Mammary epithelial cell (primary cell): ENCODE measurements at regions of chr4 and their contacts with region 1.

Region 1: GRCh38 chr4:118888666-118889311 is at the start of gene SYNPO2:
- DNase-seq: peak; percentile 78
- H3K4me3 ChIP-seq: peak within 1 kb of the TSS; percentile 44 to 62 (median 46)
- H3K27ac ChIP-seq: no peak within 1 kb of the TSS
- H3K4me1 ChIP-seq: peaks cover 15% of the 10 kb centered on the region
- H3K27me3 ChIP-seq: no peaks in the 10 kb centered on the region
- CTCF ChIP-seq: peak in 1 of 2 donors; percentile 8
- total RNA-seq, gene SYNPO2: 3.3 to 11.2 TPM

Region 2: DNA sequence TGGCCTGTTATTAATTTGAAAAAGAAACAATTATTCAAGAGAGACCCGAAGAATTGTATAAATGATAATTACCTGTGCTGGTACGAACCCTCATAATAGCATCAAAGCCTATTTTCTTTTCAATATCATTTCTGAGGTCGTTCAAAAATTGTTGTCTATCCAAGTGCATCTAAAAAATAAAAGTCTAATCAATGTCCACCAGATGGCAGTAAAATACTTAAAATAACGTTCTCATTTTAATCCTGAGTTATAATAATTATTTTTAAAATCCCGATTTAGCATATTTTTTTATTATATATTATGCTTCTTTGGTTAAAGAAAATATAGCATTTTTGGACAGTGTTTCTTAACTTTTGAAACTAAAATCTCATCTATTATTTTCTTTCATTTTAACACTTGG is 147.9 kb before region 1 on chr4:
- CTCF ChIA-PET with region 1: no interaction called
- dilution Hi-C with region 1: no loop called
- in situ Hi-C with region 1: no loop called
- intact Hi-C with region 1: loop called (anchors 1 kb)
- DNase-seq: no peak
- H3K4me3 ChIP-seq: no peak overlapping the region
- H3K27ac ChIP-seq: no peak overlapping the region
- H3K4me1 ChIP-seq: no peaks in the 10 kb centered on the region
- H3K27me3 ChIP-seq: no peaks in the 10 kb centered on the region
- CTCF ChIP-seq: peak; percentile 18 to 23

Region 3: GRCh38 chr4:118772081-118772766 is 116.6 kb before region 1 on chr4:
- CTCF ChIA-PET with region 1: no interaction called
- dilution Hi-C with region 1: no loop called
- in situ Hi-C with region 1: no loop called
- intact Hi-C with region 1: loop called (anchors 1 kb)
- DNase-seq: peak; percentile 30
- H3K4me3 ChIP-seq: no peak overlapping the region
- H3K27ac ChIP-seq: no peak overlapping the region
- H3K4me1 ChIP-seq: peaks cover 39% of the 10 kb centered on the region
- H3K27me3 ChIP-seq: no peaks in the 10 kb centered on the region
- CTCF ChIP-seq: peak; percentile 50 to 54

Region 4: GRCh38 chr4:118801899-118802575 is 86.8 kb before region 1 on chr4:
- CTCF ChIA-PET with region 1: no interaction called
- dilution Hi-C with region 1: loop called (anchors 5 kb)
- in situ Hi-C with region 1: no loop called
- intact Hi-C with region 1: no loop called
- DNase-seq: no peak
- H3K4me3 ChIP-seq: no peak overlapping the region
- H3K27ac ChIP-seq: no peak overlapping the region
- H3K4me1 ChIP-seq: no peaks in the 10 kb centered on the region
- H3K27me3 ChIP-seq: no peaks in the 10 kb centered on the region
- CTCF ChIP-seq: no peak

Region 5: GRCh38 chr4:118814058-118814457 is 74.7 kb before region 1 on chr4:
- CTCF ChIA-PET with region 1: no interaction called
- dilution Hi-C with region 1: no loop called
- in situ Hi-C with region 1: no loop called
- intact Hi-C with region 1: no loop called
- DNase-seq: no peak
- H3K4me3 ChIP-seq: no peak overlapping the region
- H3K27ac ChIP-seq: no peak overlapping the region
- H3K4me1 ChIP-seq: no peaks in the 10 kb centered on the region
- H3K27me3 ChIP-seq: no peaks in the 10 kb centered on the region
- CTCF ChIP-seq: no peak

Region 6: GRCh38 chr4:118835571-118836300 is 53.1 kb before region 1 on chr4 and contains the start of gene SEC24D:
- CTCF ChIA-PET with region 1: no interaction called
- dilution Hi-C with region 1: loop called (anchors 5 kb)
- in situ Hi-C with region 1: no loop called
- intact Hi-C with region 1: loop called (anchors 1 kb)
- DNase-seq: peak; percentile 81
- H3K4me3 ChIP-seq: peak within 1 kb of the TSS; percentile 75 to 80 (median 78)
- H3K27ac ChIP-seq: peak within 1 kb of the TSS; percentile 91
- H3K4me1 ChIP-seq: peaks cover 6% of the 10 kb centered on the region
- H3K27me3 ChIP-seq: no peaks in the 10 kb centered on the region
- CTCF ChIP-seq: no peak
- total RNA-seq, gene SEC24D: 41.8 to 70.6 TPM

Region 7: GRCh38 chr4:118842055-118842454 is 46.7 kb before region 1 on chr4:
- CTCF ChIA-PET with region 1: no interaction called
- dilution Hi-C with region 1: loop called (anchors 5 kb)
- in situ Hi-C with region 1: no loop called
- intact Hi-C with region 1: no loop called
- DNase-seq: peak; percentile 69
- H3K4me3 ChIP-seq: no peak overlapping the region
- H3K27ac ChIP-seq: no peak overlapping the region
- H3K4me1 ChIP-seq: peaks cover 11% of the 10 kb centered on the region
- H3K27me3 ChIP-seq: no peaks in the 10 kb centered on the region
- CTCF ChIP-seq: no peak

Region 8: GRCh38 chr4:118968005-118968404 is 79.2 kb after region 1 on chr4:
- CTCF ChIA-PET with region 1: no interaction called
- dilution Hi-C with region 1: no loop called
- in situ Hi-C with region 1: no loop called
- intact Hi-C with region 1: loop called (anchors 1 kb)
- DNase-seq: peak; percentile 48
- H3K4me3 ChIP-seq: no peak overlapping the region
- H3K27ac ChIP-seq: no peak overlapping the region
- H3K4me1 ChIP-seq: peaks cover 20% of the 10 kb centered on the region
- H3K27me3 ChIP-seq: no peaks in the 10 kb centered on the region
- CTCF ChIP-seq: no peak